ENCODE measurements at regions of chr12 and their contacts with region 1.

Region 1: DNA sequence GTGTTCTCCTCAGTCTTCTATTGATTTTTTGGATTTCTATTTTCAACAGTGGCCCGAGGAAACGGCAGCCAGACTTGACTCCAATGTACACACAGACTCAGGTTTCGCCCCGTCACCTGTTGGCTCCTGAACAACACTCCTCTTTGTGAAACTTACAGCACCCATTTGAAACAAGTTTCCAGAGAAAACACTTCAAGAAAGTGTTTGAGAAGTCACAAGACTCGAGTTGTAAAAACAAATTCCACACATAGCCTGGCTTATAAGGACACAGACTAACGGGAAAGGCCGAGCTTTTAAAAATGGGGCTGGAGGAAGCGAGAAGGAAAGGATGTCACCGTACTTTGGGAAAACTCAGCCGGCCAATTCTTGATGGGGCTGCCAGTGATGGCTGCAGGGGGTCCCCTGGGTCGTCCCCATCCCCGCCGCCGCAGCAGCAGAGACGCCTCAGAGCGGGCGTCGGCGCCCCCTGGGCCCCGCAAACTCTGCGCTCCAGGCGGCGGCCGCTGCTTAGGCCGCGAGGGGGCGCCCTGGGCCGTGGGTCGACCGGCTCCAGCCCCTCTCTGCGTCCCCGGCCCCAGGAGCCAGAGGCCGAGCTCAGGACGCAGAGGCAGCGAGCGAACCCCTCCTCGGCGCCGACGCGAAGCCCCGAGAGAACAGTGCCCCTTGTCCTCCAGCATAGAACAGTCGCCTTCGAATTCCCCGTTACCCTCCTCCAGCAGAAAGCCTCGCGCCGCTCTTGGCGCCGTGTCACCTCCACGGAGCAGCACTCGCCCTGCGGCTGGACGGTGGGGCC is 106.9 kb downstream of the PRICKLE1 start:
- DNase-seq: peak; percentile 77 to 88 (median 85)
- ATAC-seq: peak; percentile 76 to 91 (median 85)
- H3K4me3 ChIP-seq: peak overlapping the region; percentile 70 to 95 (median 83)
- H3K27ac ChIP-seq: peak overlapping the region; percentile 81 to 99 (median 93)
- H3K4me1 ChIP-seq: peaks cover 0 to 71% (median 35%) of the 10 kb centered on the region in 12 donors
- H3K27me3 ChIP-seq: peaks cover 0 to 30% (median 0%) of the 10 kb centered on the region in 9 donors
- CTCF ChIP-seq: peak; percentile 75 to 99 (median 93)
- POLR2A ChIP-seq: no peak

Region 2: DNA sequence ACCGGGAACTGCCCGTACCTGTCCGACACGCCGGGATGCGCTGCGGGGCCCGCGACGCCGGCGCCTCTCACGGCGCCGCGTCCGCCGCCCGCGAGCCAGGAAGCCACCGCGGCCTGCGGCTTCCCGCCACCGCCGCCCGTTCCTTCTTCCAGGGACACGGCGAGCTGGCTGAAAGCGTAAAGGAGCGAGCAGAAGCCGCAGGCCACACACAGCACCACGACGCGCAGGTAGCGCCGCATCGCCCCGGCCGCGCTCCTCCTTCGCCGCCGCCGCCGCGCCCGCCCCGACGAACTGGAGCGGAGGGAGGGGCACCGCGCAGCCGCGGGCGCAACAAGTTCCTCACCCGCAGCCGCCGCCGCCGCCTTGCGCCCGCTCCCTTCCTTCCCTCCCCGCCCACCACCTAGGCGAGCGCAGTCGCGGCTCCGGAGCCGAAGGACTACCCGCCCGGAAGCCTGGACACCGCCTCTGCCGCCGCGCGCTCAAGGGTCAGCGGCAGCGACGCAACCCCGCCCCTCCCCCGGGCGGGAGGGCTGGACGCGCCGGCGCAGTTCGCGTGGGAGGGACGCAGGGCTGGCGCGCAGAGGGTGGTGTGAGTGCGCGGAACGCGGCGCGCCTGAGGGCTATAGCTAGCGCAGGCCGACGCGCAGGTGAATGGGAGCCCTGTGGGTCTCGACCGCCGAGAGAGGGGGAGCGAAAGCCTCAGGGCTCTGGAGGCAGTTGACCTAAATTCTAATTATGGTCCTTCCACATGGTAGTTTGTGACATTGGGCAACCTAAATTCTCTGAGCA is 338.0 kb before region 1 on chr12 and contains the start of gene GXYLT1:
- intact Hi-C with region 1: loop called in 2 of 10 experiments (anchors 5 to 10 kb)
- DNase-seq: peak; percentile 94 to 97 (median 95)
- ATAC-seq: peak; percentile 95 to 99 (median 99)
- H3K4me3 ChIP-seq: peak within 1 kb of the TSS; percentile 67 to 96 (median 86)
- H3K27ac ChIP-seq: peak within 1 kb of the TSS; percentile 51 to 92 (median 86)
- H3K4me1 ChIP-seq: peaks cover 0 to 42% (median 20%) of the 10 kb centered on the region in 12 donors
- H3K27me3 ChIP-seq: no peaks in the 10 kb centered on the region
- CTCF ChIP-seq: peak in 1 of 12 donors; percentile 25
- POLR2A ChIP-seq: peak in 1 of 2 donors; percentile 86
- total RNA-seq, gene GXYLT1: 3.9 to 8.3 (median 6.3) TPM

Region 3: DNA sequence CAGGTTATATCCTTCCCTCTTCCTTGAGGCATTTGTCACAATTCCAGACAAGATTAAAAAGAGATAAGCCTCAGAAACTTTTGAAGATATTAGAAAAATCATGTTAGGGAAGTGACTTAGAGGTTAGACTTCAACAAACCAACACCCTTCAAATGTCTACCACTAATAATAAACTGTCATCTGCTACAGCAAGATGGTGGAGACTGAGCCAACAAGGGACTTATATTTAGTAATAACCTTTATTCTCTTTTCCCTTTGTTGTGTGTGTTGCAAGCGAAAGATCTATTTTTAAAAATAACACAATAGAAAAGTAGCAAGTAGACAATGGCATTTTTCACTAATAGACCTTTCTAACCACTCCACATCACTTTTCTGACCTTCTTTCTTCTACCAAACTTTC is 78.3 kb after region 1 on chr12:
- intact Hi-C with region 1: loop called in 5 of 10 experiments (anchors 2 to 5 kb)
- DNase-seq: no peak
- ATAC-seq: peak; percentile 52 to 86 (median 80)
- H3K4me3 ChIP-seq: peak overlapping the region in 1 of 12 donors; percentile 2
- H3K27ac ChIP-seq: peak overlapping the region in 11 of 12 donors; percentile 5 to 81 (median 53)
- H3K4me1 ChIP-seq: peaks cover 0 to 69% (median 19%) of the 10 kb centered on the region in 12 donors
- H3K27me3 ChIP-seq: no peaks in the 10 kb centered on the region
- CTCF ChIP-seq: no peak
- POLR2A ChIP-seq: no peak

Region 4: DNA sequence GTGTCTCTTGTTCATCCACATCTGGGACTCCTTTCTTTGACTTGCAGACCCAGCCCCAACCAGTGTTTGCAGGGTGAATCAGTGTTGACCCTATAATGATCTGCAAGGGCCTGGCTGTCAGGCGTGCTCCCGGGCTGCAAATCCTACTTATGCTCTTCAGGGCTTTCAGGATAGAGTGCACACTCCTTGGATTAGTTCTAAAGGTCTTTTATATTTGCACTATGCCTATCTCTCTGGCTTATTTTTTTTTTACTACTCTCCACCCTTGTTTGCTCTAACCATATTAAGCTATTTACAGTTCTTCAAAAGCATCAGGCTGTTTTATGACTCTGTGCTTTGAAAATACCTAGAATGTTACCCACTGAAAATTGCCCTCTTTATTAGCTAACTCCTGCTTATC is 111.2 kb after region 1 on chr12:
- intact Hi-C with region 1: no loop called
- DNase-seq: no peak
- ATAC-seq: no peak
- H3K4me3 ChIP-seq: no peak overlapping the region
- H3K27ac ChIP-seq: no peak overlapping the region
- H3K4me1 ChIP-seq: peaks cover 0 to 8% (median 0%) of the 10 kb centered on the region in 12 donors
- H3K27me3 ChIP-seq: peaks cover 0 to 18% (median 0%) of the 10 kb centered on the region in 9 donors
- CTCF ChIP-seq: no peak
- POLR2A ChIP-seq: no peak

Region 5: GRCh38 chr12:42696406-42697149 is 213.9 kb after region 1 on chr12:
- intact Hi-C with region 1: loop called in 2 of 10 experiments (anchors 10 kb)
- DNase-seq: peak; percentile 64 to 85 (median 72)
- ATAC-seq: peak; percentile 50 to 87 (median 70)
- H3K4me3 ChIP-seq: no peak overlapping the region
- H3K27ac ChIP-seq: peak overlapping the region in 9 of 12 donors; percentile 4 to 59 (median 38)
- H3K4me1 ChIP-seq: peaks cover 0 to 15% (median 3%) of the 10 kb centered on the region in 12 donors
- H3K27me3 ChIP-seq: no peaks in the 10 kb centered on the region
- CTCF ChIP-seq: peak in 1 of 12 donors; percentile 20
- POLR2A ChIP-seq: no peak

Region 6: GRCh38 chr12:43282106-43282505 is 799.5 kb after region 1 on chr12:
- intact Hi-C with region 1: loop called in 7 of 10 experiments (anchors 5 to 10 kb)
- DNase-seq: no peak
- ATAC-seq: no peak
- H3K4me3 ChIP-seq: no peak overlapping the region
- H3K27ac ChIP-seq: no peak overlapping the region
- H3K4me1 ChIP-seq: peaks cover 0 to 21% (median 0%) of the 10 kb centered on the region in 12 donors
- H3K27me3 ChIP-seq: no peaks in the 10 kb centered on the region
- CTCF ChIP-seq: peak in 10 of 12 donors; percentile 10 to 65 (median 50)
- POLR2A ChIP-seq: no peak

Region 7: GRCh38 chr12:43338848-43339526 is 856.3 kb after region 1 on chr12:
- intact Hi-C with region 1: loop called in 8 of 10 experiments (anchors 2 to 10 kb)
- DNase-seq: peak in 1 of 5 donors; percentile 22
- ATAC-seq: peak; percentile 74 to 99 (median 98)
- H3K4me3 ChIP-seq: no peak overlapping the region
- H3K27ac ChIP-seq: peak overlapping the region in 9 of 12 donors; percentile 12 to 58 (median 47)
- H3K4me1 ChIP-seq: peaks cover 0 to 16% (median 8%) of the 10 kb centered on the region in 12 donors
- H3K27me3 ChIP-seq: no peaks in the 10 kb centered on the region
- CTCF ChIP-seq: peak in 11 of 12 donors; percentile 47 to 83 (median 70)
- POLR2A ChIP-seq: no peak